ENCODE measurements at regions of chr12 and their contacts with region 1.

Region 1: DNA sequence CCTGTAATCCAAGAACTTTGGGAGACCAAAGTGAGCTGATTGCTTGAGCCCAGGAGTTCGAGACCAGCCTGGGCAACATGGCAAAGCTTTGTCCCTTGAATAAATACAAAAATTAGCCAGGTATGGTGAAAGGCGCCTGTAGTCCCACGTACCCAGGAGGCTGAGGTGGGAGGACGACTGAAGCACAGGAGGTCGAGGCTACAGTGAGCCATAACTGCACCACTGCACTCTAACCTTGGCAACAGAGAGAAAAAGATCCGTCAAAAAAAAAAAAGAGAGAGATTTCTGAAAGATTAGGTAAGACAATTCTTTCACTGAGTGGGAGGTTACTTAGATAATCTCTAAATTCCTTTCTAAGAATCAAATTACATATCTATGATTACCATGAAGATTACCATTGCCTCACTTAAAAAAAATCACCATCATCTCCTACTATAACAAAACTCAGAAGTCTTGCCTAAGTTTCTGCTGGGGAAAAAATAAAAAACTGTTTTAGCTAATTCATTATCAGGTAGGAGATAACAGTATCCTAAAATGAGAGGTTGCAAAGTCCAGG is 366.7 kb downstream of the DUSP6 start:
- DNase-seq: no peak
- H3K4me3 ChIP-seq: no peak overlapping the region
- H3K4me3 Mint-ChIP-seq: no peak overlapping the region
- H3K27ac Mint-ChIP-seq: peak overlapping the region; percentile 50
- H3K4me1 ChIP-seq: peaks cover 44% of the 10 kb centered on the region
- H3K4me1 Mint-ChIP-seq: peaks cover 12% of the 10 kb centered on the region
- H3K27me3 ChIP-seq: no peaks in the 10 kb centered on the region
- H3K27me3 Mint-ChIP-seq: no peaks in the 10 kb centered on the region
- CTCF ChIP-seq: no peak

Region 2: GRCh38 chr12:88952562-88952942 is 33.0 kb before region 1 on chr12:
- CTCF ChIA-PET with region 1: no interaction called
- POLR2A ChIA-PET with region 1: no interaction called
- intact Hi-C with region 1: loop called (anchors 2 kb)
- DNase-seq: no peak
- H3K4me3 ChIP-seq: no peak overlapping the region
- H3K4me3 Mint-ChIP-seq: peak overlapping the region; percentile 6
- H3K27ac Mint-ChIP-seq: peak overlapping the region; percentile 72
- H3K4me1 ChIP-seq: peaks cover 80% of the 10 kb centered on the region
- H3K4me1 Mint-ChIP-seq: peaks cover 64% of the 10 kb centered on the region
- H3K27me3 ChIP-seq: no peaks in the 10 kb centered on the region
- H3K27me3 Mint-ChIP-seq: no peaks in the 10 kb centered on the region
- CTCF ChIP-seq: no peak